B cell (primary cell): ENCODE measurements at regions of chr7 and their contacts with region 1.

Region 1: GRCh38 chr7:149497456-149498261 is at the start of gene ZNF746:
- DNase-seq: peak; percentile 89
- ATAC-seq: peak; percentile 96
- H3K4me3 ChIP-seq: peak within 1 kb of the TSS; percentile 27 to 87 (median 60)
- H3K4me3 Mint-ChIP-seq: peak within 1 kb of the TSS; percentile 93
- H3K27ac ChIP-seq: peak within 1 kb of the TSS in 1 of 2 donors; percentile 78
- H3K27ac Mint-ChIP-seq: peak within 1 kb of the TSS; percentile 92
- H3K4me1 ChIP-seq: peaks cover 12 to 19% of the 10 kb centered on the region in 2 donors
- H3K4me1 Mint-ChIP-seq: peaks cover 23% of the 10 kb centered on the region
- H3K27me3 ChIP-seq: no peaks in the 10 kb centered on the region
- H3K27me3 Mint-ChIP-seq: no peaks in the 10 kb centered on the region
- CTCF ChIP-seq: peak; percentile 43
- total RNA-seq, gene ZNF746: 30.4 and 32.2 TPM in 2 replicates

Region 2: GRCh38 chr7:149125863-149126661 is 371.6 kb before region 1 on chr7 and contains the start of gene ZNF425:
- CTCF ChIA-PET with region 1: no interaction called
- POLR2A ChIA-PET with region 1: no interaction called
- intact Hi-C with region 1: loop called (anchors 5 kb)
- DNase-seq: peak; percentile 95
- ATAC-seq: peak; percentile 84
- H3K4me3 ChIP-seq: peak within 1 kb of the TSS; percentile 64 to 98 (median 88)
- H3K4me3 Mint-ChIP-seq: peak within 1 kb of the TSS; percentile 97
- H3K27ac ChIP-seq: peak within 1 kb of the TSS; percentile 85 to 89
- H3K27ac Mint-ChIP-seq: peak within 1 kb of the TSS; percentile 99
- H3K4me1 ChIP-seq: peaks cover 12 to 14% of the 10 kb centered on the region in 2 donors
- H3K4me1 Mint-ChIP-seq: peaks cover 22% of the 10 kb centered on the region
- H3K27me3 ChIP-seq: no peaks in the 10 kb centered on the region
- H3K27me3 Mint-ChIP-seq: no peaks in the 10 kb centered on the region
- CTCF ChIP-seq: peak; percentile 89
- total RNA-seq, gene ZNF425: 2.8 and 3.3 TPM in 2 replicates

Region 3: DNA sequence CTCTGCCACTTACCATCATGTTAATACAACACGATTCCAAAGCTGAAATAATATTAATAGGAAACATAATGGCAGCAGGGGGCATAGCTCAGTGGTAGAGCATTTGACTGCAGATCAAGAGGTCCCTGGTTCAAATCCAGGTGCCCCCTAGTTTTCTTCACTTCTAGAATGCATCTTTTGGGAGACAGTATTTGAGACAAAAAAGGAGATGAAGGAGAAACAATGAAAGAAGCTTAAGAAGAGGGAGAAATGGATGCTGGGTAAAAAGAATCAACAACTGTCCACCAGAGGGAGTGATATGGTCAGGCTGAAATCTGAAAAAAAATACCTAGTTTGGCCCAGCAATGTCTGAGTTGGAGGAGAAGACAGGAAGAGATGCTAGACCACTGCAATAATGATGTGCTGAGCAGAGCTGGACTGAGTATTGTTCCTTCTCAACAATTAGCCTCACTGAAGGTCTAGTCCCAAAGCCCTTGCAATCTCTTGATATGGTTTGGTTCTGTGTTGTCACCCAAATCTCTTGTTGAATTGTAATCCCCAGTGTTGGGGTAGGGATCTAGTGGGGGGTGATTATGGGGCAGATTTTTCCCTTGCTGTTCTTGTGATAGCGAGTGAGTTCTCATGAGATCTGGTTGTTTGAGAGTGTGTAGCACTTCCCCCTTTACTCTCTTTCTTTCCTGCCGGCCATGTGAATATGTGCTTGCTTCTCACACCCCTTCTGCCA is 187.4 kb before region 1 on chr7:
- CTCF ChIA-PET with region 1: no interaction called
- POLR2A ChIA-PET with region 1: no interaction called
- intact Hi-C with region 1: loop called (anchors 1 kb)
- DNase-seq: peak; percentile 50
- ATAC-seq: peak; percentile 63
- H3K4me3 ChIP-seq: no peak overlapping the region
- H3K4me3 Mint-ChIP-seq: no peak overlapping the region
- H3K27ac ChIP-seq: no peak overlapping the region
- H3K27ac Mint-ChIP-seq: no peak overlapping the region
- H3K4me1 ChIP-seq: no peaks in the 10 kb centered on the region
- H3K4me1 Mint-ChIP-seq: no peaks in the 10 kb centered on the region
- H3K27me3 ChIP-seq: no peaks in the 10 kb centered on the region
- H3K27me3 Mint-ChIP-seq: peaks cover 3% of the 10 kb centered on the region
- CTCF ChIP-seq: peak; percentile 56

Region 4: GRCh38 chr7:149440222-149440621 is 57.4 kb before region 1 on chr7:
- CTCF ChIA-PET with region 1: no interaction called
- POLR2A ChIA-PET with region 1: no interaction called
- intact Hi-C with region 1: no loop called
- DNase-seq: no peak
- ATAC-seq: no peak
- H3K4me3 ChIP-seq: no peak overlapping the region
- H3K4me3 Mint-ChIP-seq: no peak overlapping the region
- H3K27ac ChIP-seq: no peak overlapping the region
- H3K27ac Mint-ChIP-seq: no peak overlapping the region
- H3K4me1 ChIP-seq: no peaks in the 10 kb centered on the region
- H3K4me1 Mint-ChIP-seq: no peaks in the 10 kb centered on the region
- H3K27me3 ChIP-seq: no peaks in the 10 kb centered on the region
- H3K27me3 Mint-ChIP-seq: no peaks in the 10 kb centered on the region
- CTCF ChIP-seq: no peak

Region 5: DNA sequence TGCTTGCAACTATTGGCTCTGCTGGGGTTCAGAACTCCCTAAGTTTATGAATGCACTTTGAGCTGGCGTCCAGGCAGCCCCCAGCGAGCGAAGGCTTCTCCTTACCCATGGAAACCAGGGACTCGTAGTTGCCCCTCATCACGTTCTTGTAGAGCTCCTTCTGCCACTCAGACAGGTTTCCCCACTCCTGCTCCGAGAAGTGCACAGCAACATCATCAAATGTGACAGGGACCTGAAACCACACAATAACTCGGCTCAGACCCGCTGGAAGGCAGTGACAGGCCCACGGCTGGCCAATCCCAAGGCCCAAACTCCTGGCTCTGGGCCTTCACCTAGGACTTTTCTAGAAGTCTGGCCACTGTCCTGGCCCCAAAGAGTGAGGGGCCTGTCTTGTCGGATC is 43.7 kb before region 1 on chr7:
- CTCF ChIA-PET with region 1: no interaction called
- POLR2A ChIA-PET with region 1: no interaction called
- intact Hi-C with region 1: no loop called
- DNase-seq: no peak
- ATAC-seq: no peak
- H3K4me3 ChIP-seq: no peak overlapping the region
- H3K4me3 Mint-ChIP-seq: no peak overlapping the region
- H3K27ac ChIP-seq: no peak overlapping the region
- H3K27ac Mint-ChIP-seq: no peak overlapping the region
- H3K4me1 ChIP-seq: peaks cover 1 to 3% of the 10 kb centered on the region in 2 donors
- H3K4me1 Mint-ChIP-seq: peaks cover 15% of the 10 kb centered on the region
- H3K27me3 ChIP-seq: no peaks in the 10 kb centered on the region
- H3K27me3 Mint-ChIP-seq: no peaks in the 10 kb centered on the region
- CTCF ChIP-seq: no peak

Region 6: DNA sequence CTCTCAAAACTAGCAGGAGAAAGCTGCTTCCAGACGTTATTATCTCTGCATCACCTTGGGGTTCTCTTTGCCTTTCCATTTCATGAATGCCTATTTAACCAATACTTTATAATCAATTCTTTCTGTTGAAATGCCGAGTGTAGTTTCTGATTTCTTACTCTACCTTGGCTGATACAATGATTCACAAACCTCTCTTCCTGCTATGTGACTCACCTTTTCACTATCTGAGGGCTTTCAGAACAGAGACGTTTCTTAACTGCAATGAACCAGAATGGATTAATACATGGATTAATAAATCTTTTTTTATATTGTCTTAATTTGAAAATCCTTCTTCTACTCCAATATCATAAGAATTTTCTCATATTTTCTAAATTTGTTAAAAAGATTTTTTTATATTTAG is 46.4 kb after region 1 on chr7:
- CTCF ChIA-PET with region 1: no interaction called
- POLR2A ChIA-PET with region 1: no interaction called
- intact Hi-C with region 1: loop called (anchors 1 kb)
- DNase-seq: no peak
- ATAC-seq: no peak
- H3K4me3 ChIP-seq: no peak overlapping the region
- H3K4me3 Mint-ChIP-seq: no peak overlapping the region
- H3K27ac ChIP-seq: no peak overlapping the region
- H3K27ac Mint-ChIP-seq: no peak overlapping the region
- H3K4me1 ChIP-seq: no peaks in the 10 kb centered on the region
- H3K4me1 Mint-ChIP-seq: peaks cover 2% of the 10 kb centered on the region
- H3K27me3 ChIP-seq: no peaks in the 10 kb centered on the region
- H3K27me3 Mint-ChIP-seq: no peaks in the 10 kb centered on the region
- CTCF ChIP-seq: no peak

Region 7: DNA sequence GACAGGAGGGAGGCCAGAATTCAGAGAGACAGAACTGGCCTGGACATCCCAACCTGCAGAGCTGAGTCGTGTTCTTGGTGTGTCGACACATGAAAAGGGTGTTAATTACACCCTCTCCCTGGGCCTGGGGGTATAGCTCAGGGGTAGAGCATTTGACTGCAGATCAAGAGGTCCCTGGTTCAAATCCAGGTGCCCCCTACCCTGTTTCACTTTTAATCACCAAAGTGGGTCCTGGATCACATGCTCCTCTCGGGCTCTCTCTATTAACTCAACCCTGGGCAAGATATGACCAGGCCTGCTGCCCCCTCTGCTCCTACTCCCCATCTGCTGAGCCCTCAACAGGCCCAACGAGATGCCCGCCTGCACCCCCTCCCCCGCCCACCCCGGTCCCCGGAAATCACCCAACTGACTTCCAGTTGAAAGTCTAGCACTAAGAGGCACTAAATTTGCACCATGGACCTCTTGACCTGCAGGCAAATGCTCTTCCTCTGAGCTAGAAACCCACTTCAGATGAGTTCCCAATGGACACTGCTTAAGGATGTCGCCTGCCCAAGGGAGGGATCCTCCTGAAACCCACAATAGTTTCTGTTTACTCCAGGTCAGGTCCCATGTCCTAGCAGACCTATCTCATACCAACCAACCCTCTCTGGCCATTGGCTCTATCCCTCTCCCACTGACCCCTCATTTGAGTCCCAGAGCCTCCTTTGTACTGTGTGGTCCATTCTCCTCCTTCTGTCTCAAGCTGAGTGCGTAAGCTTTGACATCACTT is 138.1 kb after region 1 on chr7:
- CTCF ChIA-PET with region 1: no interaction called
- POLR2A ChIA-PET with region 1: no interaction called
- intact Hi-C with region 1: no loop called
- DNase-seq: no peak
- ATAC-seq: no peak
- H3K4me3 ChIP-seq: no peak overlapping the region
- H3K4me3 Mint-ChIP-seq: no peak overlapping the region
- H3K27ac ChIP-seq: no peak overlapping the region
- H3K27ac Mint-ChIP-seq: no peak overlapping the region
- H3K4me1 ChIP-seq: no peaks in the 10 kb centered on the region
- H3K4me1 Mint-ChIP-seq: no peaks in the 10 kb centered on the region
- H3K27me3 ChIP-seq: peaks cover 0 to 16% (median 0%) of the 10 kb centered on the region in 4 experiments
- H3K27me3 Mint-ChIP-seq: peaks cover 19% of the 10 kb centered on the region
- CTCF ChIP-seq: no peak

Region 8: DNA sequence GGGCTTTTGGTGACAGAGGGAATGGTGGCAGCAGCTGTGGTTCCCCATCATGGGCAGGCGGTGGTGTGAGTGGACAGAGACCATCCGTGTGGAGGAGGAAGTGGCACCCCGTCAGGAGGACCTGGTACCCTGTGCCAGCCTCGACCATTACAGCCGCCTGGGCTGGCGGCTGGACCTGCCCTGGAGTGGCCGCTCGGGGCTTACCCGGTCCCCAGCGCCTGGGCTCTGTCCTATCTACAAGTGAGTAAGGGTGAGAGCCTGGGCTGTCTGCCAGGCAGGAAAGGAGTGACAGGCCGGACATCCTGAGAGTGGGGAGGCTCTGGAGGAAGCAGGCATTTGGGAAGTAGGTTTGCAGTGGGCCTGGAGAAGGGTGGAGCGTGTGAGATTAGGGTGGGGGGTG is 278.6 kb after region 1 on chr7:
- CTCF ChIA-PET with region 1: no interaction called
- POLR2A ChIA-PET with region 1: no interaction called
- intact Hi-C with region 1: no loop called
- DNase-seq: no peak
- ATAC-seq: no peak
- H3K4me3 ChIP-seq: no peak overlapping the region
- H3K4me3 Mint-ChIP-seq: no peak overlapping the region
- H3K27ac ChIP-seq: no peak overlapping the region
- H3K27ac Mint-ChIP-seq: no peak overlapping the region
- H3K4me1 ChIP-seq: peaks cover under 1 to 12% of the 10 kb centered on the region in 2 donors
- H3K4me1 Mint-ChIP-seq: peaks cover 7% of the 10 kb centered on the region
- H3K27me3 ChIP-seq: peaks cover 0 to 8% (median 1%) of the 10 kb centered on the region in 4 experiments
- H3K27me3 Mint-ChIP-seq: no peaks in the 10 kb centered on the region
- CTCF ChIP-seq: no peak

Region 9: DNA sequence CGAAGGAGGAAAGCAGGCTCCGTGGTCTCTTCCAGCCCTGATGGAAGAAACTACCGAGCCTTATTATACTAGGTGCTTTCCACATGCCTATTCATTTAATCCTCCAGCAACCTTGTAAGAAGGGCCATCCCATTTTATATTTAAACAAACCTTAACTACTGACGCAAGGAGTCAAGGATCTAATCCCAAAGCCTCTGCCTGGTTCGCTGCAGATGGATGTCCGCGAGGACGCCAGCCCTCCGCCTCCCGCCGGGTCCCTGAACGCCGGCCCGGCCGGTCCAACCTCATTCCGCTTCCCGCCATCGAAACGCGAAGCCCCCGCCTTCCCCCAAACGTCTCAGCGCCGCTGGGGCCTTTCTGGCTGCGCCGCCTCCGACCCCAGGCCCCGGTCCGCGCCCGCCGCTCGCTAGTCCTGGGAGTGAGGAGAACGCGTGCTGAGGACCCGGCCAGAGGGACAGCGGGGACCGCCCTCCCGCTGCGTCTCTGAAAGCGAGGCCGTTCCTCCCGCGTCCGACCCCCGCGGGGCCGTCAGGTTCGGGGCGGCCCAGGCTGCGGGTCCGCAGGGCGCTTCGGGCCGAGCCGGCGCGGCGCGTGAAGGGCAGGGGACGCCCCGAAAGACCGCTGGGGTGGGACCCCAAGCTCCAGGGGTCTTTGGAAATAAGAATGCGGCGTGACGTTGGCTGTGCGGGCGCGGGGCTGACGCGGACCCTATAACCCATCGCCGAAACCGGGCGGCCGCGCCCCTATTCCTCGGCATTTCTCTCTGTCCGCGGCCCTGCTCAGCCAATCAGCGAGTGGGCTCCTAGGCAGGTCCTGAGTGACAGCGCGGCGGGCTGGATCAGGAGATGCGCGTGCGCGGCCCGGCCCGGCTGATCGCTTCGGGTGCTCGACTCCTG is 375.7 kb after region 1 on chr7 and contains the start of gene ATP6V0E2:
- CTCF ChIA-PET with region 1: no interaction called
- POLR2A ChIA-PET with region 1: no interaction called
- intact Hi-C with region 1: loop called (anchors 10 kb)
- DNase-seq: peak; percentile 92
- ATAC-seq: peak; percentile 95
- H3K4me3 ChIP-seq: peak within 1 kb of the TSS; percentile 3 to 90 (median 73)
- H3K4me3 Mint-ChIP-seq: peak within 1 kb of the TSS; percentile 90
- H3K27ac ChIP-seq: peak within 1 kb of the TSS; percentile 41 to 66
- H3K27ac Mint-ChIP-seq: peak within 1 kb of the TSS; percentile 73
- H3K4me1 ChIP-seq: peaks cover 39 to 41% of the 10 kb centered on the region in 2 donors
- H3K4me1 Mint-ChIP-seq: peaks cover 40% of the 10 kb centered on the region
- H3K27me3 ChIP-seq: no peaks in the 10 kb centered on the region
- H3K27me3 Mint-ChIP-seq: no peaks in the 10 kb centered on the region
- CTCF ChIP-seq: no peak
- total RNA-seq, gene ATP6V0E2: 13.5 and 15.4 TPM in 2 replicates